ENCODE measurements at regions of chr12 and their contacts with region 1.

Region 1: DNA sequence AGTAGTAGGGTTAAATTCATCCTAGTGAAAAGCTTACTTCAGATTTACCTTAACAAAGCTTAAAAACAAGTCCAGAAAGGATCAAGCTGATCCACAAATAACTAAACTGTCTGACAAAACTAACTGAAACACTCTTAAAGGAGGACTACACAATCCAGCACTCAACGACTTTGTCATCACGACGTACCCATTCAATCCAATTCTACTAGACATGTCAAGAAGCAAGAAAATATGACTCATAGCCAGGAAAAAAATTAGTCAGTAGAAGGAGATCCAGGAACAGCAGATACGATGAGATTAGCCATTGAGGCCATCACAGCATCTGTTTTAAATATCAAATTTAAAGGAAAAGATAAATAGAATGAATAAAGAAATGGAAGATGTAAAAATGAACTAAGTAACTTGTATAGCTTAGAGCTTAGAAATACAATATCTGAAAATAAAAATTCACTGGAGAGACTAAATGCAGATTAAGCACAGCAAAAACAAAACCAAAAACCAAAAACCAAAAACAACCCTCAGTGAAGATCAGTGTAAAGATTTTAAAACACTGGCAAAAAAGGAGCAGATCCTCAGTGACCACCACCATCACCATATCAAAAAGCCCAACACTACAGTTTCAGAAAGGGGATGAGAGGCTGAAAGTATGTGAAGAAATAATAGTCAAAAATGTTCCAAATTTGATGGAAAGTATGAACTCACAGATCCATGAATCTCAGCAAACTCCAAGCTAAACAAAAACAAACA is 95.0 kb upstream of the CCND2 start:
- DNase-seq: no peak
- H3K4me3 Mint-ChIP-seq: peak overlapping the region; percentile 41
- H3K27ac Mint-ChIP-seq: peak overlapping the region; percentile 75
- H3K4me1 Mint-ChIP-seq: peaks cover 21% of the 10 kb centered on the region
- H3K27me3 Mint-ChIP-seq: peaks cover 2% of the 10 kb centered on the region

Region 2: GRCh38 chr12:4107436-4107878 is 71.1 kb before region 1 on chr12:
- intact Hi-C with region 1: loop called (anchors 1 kb)
- DNase-seq: peak; percentile 75
- H3K4me3 Mint-ChIP-seq: peak overlapping the region; percentile 59
- H3K27ac Mint-ChIP-seq: peak overlapping the region; percentile 94
- H3K4me1 Mint-ChIP-seq: peaks cover 58% of the 10 kb centered on the region
- H3K27me3 Mint-ChIP-seq: peaks cover 4% of the 10 kb centered on the region

Region 3: GRCh38 chr12:4118017-4118510 is 60.5 kb before region 1 on chr12:
- intact Hi-C with region 1: loop called (anchors 1 kb)
- DNase-seq: no peak
- H3K4me3 Mint-ChIP-seq: peak overlapping the region; percentile 67
- H3K27ac Mint-ChIP-seq: peak overlapping the region; percentile 81
- H3K4me1 Mint-ChIP-seq: peaks cover 80% of the 10 kb centered on the region
- H3K27me3 Mint-ChIP-seq: no peaks in the 10 kb centered on the region

Region 4: GRCh38 chr12:4143896-4144295 is 34.7 kb before region 1 on chr12:
- intact Hi-C with region 1: loop called (anchors 1 kb)
- DNase-seq: no peak
- H3K4me3 Mint-ChIP-seq: peak overlapping the region; percentile 23
- H3K27ac Mint-ChIP-seq: peak overlapping the region; percentile 68
- H3K4me1 Mint-ChIP-seq: peaks cover 97% of the 10 kb centered on the region
- H3K27me3 Mint-ChIP-seq: no peaks in the 10 kb centered on the region

Region 5: GRCh38 chr12:4164559-4165558 is 13.7 kb before region 1 on chr12:
- intact Hi-C with region 1: loop called (anchors 1 kb)
- DNase-seq: peak; percentile 67
- H3K4me3 Mint-ChIP-seq: peak overlapping the region; percentile 88
- H3K27ac Mint-ChIP-seq: peak overlapping the region; percentile 99
- H3K4me1 Mint-ChIP-seq: peaks cover 68% of the 10 kb centered on the region
- H3K27me3 Mint-ChIP-seq: no peaks in the 10 kb centered on the region

Region 6: GRCh38 chr12:4269279-4269991 is 90.8 kb after region 1 on chr12:
- intact Hi-C with region 1: loop called (anchors 1 kb)
- DNase-seq: peak; percentile 91
- H3K4me3 Mint-ChIP-seq: peak overlapping the region; percentile 90
- H3K27ac Mint-ChIP-seq: peak overlapping the region; percentile 94
- H3K4me1 Mint-ChIP-seq: peaks cover 26% of the 10 kb centered on the region
- H3K27me3 Mint-ChIP-seq: peaks cover 9% of the 10 kb centered on the region